ENCODE measurements at regions of chr3 and their contacts with region 1.

Region 1: GRCh38 chr3:154095832-154096421 is 25.3 kb upstream of the ARHGEF26 start:
- DNase-seq: no peak
- ATAC-seq: no peak

Region 2: DNA sequence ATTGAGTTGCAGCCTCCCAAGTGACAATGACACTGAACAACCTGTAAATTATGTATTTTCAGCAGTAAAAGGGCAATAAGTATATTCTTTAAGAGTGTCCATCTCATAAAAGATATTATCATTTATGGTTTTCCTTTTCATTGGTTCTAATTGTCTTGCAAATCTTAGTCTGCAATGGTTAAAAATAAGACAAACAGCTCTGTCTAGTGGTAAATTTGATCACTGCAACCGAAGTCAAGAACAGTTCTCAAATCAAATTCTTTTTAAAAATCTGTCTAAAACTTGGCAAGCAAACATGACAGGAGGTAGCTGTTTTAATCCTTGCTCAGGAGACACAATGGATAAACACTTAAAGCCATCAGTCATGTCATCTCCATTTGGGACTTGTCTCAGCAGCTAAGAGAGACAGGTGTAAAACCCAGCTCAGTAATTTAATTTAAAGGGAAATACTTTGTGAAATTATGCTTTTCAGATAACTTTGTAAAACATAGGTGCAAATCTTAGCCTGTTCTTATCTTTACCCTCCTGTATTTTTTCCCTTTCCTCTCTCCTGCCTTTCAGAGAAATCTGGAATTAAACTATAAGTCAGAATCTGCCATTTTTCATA is 125.1 kb before region 1 on chr3:
- intact Hi-C with region 1: no loop called
- DNase-seq: no peak
- ATAC-seq: no peak

Region 3: GRCh38 chr3:154081305-154081704 is 14.6 kb before region 1 on chr3:
- intact Hi-C with region 1: no loop called
- DNase-seq: no peak
- ATAC-seq: no peak

Region 4: DNA sequence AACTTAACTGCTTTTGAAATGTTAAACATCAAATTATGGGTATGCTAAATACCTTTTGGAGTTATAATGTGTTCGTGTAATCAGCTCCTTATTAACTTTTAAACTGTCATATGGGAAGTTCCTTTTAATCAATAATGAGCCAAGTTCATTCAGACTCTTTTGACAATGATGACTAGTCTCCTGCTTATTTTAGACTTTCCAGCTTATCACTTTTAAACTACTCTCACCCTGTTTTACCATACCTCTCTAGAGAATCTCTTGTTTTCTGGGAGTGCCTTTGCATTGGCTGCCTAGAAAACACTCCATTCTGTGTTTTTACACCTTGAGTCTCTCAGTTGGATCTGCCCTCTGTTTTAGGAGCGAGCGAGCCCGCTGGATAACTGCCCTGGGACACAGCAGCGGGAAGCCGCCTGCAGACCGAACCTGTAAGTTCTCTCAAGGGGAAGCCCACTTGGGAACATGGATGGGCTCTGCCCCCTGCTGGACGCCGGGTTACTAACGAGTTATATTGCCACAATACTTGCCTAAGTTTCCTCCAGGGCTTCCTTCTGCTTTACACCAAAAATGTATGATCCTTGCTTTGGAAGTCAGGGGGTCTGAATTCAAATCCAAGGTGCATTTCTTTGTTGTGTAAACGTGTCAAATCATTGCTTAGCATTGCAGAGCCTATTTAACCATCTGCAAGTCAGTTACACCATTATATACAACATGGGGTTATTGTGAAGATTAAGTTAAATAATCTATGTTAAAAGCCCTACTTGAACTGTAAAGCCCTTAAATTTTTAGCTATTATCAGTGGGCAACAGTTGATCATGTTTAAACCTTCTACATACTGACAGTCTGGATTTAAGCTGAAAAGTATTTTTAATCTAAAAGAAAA is 157.1 kb after region 1 on chr3:
- intact Hi-C with region 1: loop called (anchors 2 kb)
- DNase-seq: peak; percentile 91
- ATAC-seq: peak; percentile 85